PC-3 (cell line): ENCODE measurements at regions of chr4 and their contacts with region 1.

Region 1: GRCh38 chr4:45442466-45442865 is 681.4 kb downstream of the GABRG1 start:
- DNase-seq: peak; percentile 46
- ATAC-seq: peak; percentile 65
- H3K4me3 ChIP-seq: no peak overlapping the region
- H3K27ac ChIP-seq: no peak overlapping the region
- H3K4me1 ChIP-seq: no peaks in the 10 kb centered on the region
- H3K27me3 ChIP-seq: no peaks in the 10 kb centered on the region
- CTCF ChIP-seq: peak; percentile 63

Region 2: GRCh38 chr4:44760142-44760898 is 682.1 kb before region 1 on chr4:
- CTCF ChIA-PET with region 1: no interaction called
- POLR2A ChIA-PET with region 1: no interaction called
- intact Hi-C with region 1: loop called (anchors 5 kb)
- DNase-seq: peak; percentile 46
- ATAC-seq: peak; percentile 43
- H3K4me3 ChIP-seq: no peak overlapping the region
- H3K27ac ChIP-seq: no peak overlapping the region
- H3K4me1 ChIP-seq: no peaks in the 10 kb centered on the region
- H3K27me3 ChIP-seq: no peaks in the 10 kb centered on the region
- CTCF ChIP-seq: peak; percentile 63

Region 3: DNA sequence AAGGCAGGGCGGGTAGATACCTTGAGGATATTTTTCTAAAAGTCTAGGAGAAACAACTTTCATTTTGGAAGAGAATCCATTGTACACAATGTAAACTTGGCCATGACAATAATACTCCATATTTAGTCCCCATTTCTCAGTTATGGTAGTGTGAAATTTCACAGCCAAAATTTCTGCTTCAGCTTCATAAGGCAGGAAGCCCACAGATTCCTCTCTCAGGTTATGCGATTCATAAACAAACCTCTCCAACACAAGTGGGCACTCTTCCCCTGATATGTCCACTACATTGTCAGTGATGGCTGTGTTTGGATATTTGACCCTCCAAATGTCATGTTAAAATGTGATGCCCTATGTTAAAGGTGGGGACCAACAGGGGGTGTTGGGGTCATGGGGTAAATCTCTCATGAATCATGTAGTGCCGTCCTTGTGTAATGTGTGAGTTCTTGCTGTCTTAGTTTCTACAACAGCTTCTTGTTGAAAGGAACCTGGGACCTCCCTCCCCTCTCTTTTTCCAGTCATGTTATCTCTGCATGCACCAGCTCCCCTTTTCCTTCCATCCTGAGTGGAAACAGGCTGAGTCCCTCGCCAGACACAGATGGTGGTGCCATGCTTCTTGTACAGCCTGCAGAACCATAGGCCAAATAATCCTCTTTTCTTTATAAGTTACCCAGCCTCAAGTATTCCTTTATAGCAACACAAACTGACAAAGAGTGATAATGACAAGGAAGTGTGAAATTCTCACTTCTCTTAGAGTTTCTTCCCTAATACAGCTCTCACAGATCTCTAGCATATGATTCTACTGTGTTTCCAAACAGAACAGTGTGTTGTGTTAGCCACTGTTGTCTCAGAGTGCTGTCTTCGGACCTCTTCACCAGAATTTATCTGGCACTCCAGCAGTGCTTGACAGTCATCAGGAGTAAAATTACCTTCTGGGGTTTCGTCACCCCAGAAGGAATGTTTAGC is 117.7 kb before region 1 on chr4:
- CTCF ChIA-PET with region 1: no interaction called
- POLR2A ChIA-PET with region 1: no interaction called
- intact Hi-C with region 1: no loop called
- DNase-seq: no peak
- ATAC-seq: no peak
- H3K4me3 ChIP-seq: no peak overlapping the region
- H3K27ac ChIP-seq: no peak overlapping the region
- H3K4me1 ChIP-seq: no peaks in the 10 kb centered on the region
- H3K27me3 ChIP-seq: no peaks in the 10 kb centered on the region
- CTCF ChIP-seq: no peak

Region 4: GRCh38 chr4:45346816-45347435 is 95.5 kb before region 1 on chr4:
- CTCF ChIA-PET with region 1: no interaction called
- POLR2A ChIA-PET with region 1: no interaction called
- intact Hi-C with region 1: loop called (anchors 5 kb)
- DNase-seq: no peak
- ATAC-seq: no peak
- H3K4me3 ChIP-seq: no peak overlapping the region
- H3K27ac ChIP-seq: no peak overlapping the region
- H3K4me1 ChIP-seq: peaks cover 3% of the 10 kb centered on the region; the same call in 1 of the 2 replicates
- H3K27me3 ChIP-seq: no peaks in the 10 kb centered on the region
- CTCF ChIP-seq: no peak